Activated T-helper 2 cell treated with anti-CD3 and anti-CD28 coated beads, Interferon-gamma antibody, Interleukin-2, Interleukin-4, amounts not matched to agents 10 μg/mL and 5 μg/mL and 100 μg/mL, durations not matched to agents 14 hours and 24 hours and 36 hours (primary cell): ENCODE measurements at regions of chr14 and their contacts with region 1.

Region 1: DNA sequence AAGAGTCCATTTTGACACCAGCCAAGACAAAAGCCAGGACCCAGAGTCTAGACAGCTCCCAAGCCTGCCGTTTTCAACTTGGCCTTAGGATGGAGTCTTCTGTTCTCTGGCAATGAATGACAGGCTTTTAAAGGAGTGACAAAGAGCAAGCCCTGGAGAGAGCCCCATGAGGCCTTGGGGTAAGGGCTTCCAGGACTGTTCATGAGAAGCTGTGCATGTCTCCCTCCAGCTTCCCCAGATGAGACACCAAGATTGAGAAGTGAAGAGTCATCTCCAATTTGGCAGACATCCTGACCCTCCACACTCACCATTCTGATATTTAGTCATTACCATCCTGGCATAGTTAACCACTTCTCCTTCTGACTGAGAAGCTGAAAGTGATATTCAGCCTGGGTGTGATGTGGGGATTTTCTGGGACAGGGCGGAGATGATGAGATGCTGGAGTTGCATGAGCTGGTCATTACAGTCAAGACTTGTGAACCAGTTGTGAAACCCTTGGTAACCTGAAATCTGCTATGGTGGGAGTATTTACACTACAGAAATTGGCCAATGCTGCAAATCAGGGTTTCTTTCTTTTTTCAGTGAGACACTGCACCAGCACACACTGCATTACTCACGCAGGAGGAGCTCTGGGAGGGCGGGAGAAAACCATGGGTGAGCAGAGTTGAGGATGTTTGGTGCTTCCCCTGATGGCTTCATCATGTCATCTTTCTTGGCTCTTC is 77.8 kb downstream of the VCPKMT start:
- DNase-seq: peak; percentile 58
- H3K4me3 Mint-ChIP-seq: peak overlapping the region; percentile 68
- H3K27ac Mint-ChIP-seq: peak overlapping the region; percentile 97
- H3K4me1 Mint-ChIP-seq: peaks cover 48% of the 10 kb centered on the region
- H3K27me3 Mint-ChIP-seq: no peaks in the 10 kb centered on the region

Region 2: GRCh38 chr14:49862089-49862673 is 176.4 kb before region 1 on chr14:
- intact Hi-C with region 1: loop called (anchors 1 kb)
- DNase-seq: peak; percentile 83
- H3K4me3 Mint-ChIP-seq: no peak overlapping the region
- H3K27ac Mint-ChIP-seq: no peak overlapping the region
- H3K4me1 Mint-ChIP-seq: peaks cover 16% of the 10 kb centered on the region
- H3K27me3 Mint-ChIP-seq: no peaks in the 10 kb centered on the region

Region 3: GRCh38 chr14:49959822-49960408 is 78.6 kb before region 1 on chr14:
- intact Hi-C with region 1: loop called (anchors 5 kb)
- DNase-seq: no peak
- H3K4me3 Mint-ChIP-seq: no peak overlapping the region
- H3K27ac Mint-ChIP-seq: peak overlapping the region; percentile 38
- H3K4me1 Mint-ChIP-seq: peaks cover 42% of the 10 kb centered on the region
- H3K27me3 Mint-ChIP-seq: no peaks in the 10 kb centered on the region

Region 4: DNA sequence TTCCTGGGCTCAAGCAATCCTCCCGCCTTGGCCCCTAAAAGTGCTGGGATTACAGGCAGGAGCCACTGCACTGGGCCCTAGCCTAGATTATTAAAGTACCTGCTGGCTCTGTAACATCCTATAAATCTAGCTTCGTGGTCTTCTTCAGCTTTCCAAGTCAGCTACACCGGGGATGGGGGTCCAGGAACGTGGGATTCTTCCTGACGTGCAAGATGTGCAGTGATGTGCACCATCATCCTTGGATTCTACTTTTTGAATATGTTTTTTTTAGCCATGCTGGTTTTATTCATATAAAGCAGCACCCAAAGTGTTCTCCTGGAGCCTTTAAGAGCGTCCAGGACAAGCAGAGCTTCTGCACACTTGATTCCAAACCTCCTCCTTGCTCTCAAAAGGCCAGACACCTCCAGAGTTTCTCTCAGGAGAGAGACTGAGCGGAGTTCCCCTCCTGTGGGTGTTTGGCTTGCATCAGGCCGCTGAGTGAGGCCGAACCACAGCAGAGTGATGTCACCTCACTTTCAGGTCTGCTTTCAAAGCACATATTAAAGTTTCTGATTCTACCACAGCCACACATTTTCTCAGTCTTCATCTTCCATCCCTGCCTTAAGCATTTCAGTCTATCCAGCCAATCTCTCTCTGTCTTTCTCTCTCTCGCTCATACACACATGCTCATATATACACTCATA is 44.4 kb after region 1 on chr14:
- intact Hi-C with region 1: loop called (anchors 1 kb)
- DNase-seq: peak; percentile 81
- H3K4me3 Mint-ChIP-seq: peak overlapping the region; percentile 49
- H3K27ac Mint-ChIP-seq: peak overlapping the region; percentile 91
- H3K4me1 Mint-ChIP-seq: peaks cover 62% of the 10 kb centered on the region
- H3K27me3 Mint-ChIP-seq: no peaks in the 10 kb centered on the region

Region 5: GRCh38 chr14:50095895-50096294 is 57.3 kb after region 1 on chr14:
- intact Hi-C with region 1: loop called (anchors 2 kb)
- DNase-seq: no peak
- H3K4me3 Mint-ChIP-seq: peak overlapping the region; percentile 45
- H3K27ac Mint-ChIP-seq: peak overlapping the region; percentile 81
- H3K4me1 Mint-ChIP-seq: peaks cover 56% of the 10 kb centered on the region
- H3K27me3 Mint-ChIP-seq: peaks cover 4% of the 10 kb centered on the region

Region 6: GRCh38 chr14:50109342-50109741 is 70.8 kb after region 1 on chr14:
- intact Hi-C with region 1: loop called (anchors 2 kb)
- DNase-seq: no peak
- H3K4me3 Mint-ChIP-seq: no peak overlapping the region
- H3K27ac Mint-ChIP-seq: no peak overlapping the region
- H3K4me1 Mint-ChIP-seq: peaks cover 20% of the 10 kb centered on the region
- H3K27me3 Mint-ChIP-seq: no peaks in the 10 kb centered on the region